ENCODE measurements at regions of chr2 and their contacts with region 1.

Region 1: DNA sequence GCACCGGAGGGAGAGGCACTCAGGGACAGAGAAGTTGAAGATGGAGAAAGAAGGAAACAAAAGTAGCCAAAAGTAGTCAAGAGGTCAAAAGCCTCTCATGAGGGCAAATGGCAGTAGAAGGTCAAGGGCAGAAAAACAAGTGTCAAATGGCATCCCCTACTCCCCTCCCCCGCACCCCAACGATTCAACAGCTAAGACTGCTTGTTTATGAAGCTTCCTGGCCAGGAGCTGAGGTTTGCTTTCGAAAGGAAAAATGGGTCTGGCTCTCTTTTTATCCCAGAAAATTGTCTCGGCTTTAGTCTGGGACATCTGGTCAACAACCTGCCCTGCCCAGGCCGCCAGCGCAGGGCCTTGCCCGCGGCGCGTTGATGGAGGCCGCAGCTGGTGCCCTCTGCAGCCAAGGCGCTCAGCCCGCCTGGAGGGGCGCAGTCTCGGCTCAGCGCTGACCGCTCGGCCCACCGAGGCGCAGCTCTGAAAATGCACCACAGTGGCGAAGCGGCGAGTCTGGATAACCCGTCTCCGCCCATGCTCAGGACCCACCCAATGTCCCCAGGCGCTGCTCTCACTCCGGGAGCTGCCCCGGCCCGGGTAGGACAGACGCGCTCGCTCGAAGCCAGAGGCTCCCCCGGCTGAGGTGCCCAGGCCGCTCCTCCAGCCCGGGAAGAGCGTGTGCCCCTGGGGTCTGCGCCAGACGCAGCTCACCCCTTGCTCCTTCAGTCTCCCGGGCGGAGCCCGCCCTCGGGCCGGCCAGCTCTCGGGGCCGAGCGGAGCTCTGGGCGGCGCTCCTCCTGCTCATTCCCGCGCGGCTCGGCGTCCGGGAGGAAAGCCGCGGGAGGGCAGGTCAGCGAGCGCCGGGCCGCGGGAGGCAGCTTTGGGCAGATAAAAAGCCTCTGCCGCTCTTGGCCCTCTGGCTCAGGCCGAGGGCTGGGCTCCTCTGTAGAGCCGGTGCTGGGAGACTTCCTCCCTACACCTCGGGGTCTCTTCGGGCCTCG is 1.8 kb upstream of the TBR1 start:
- DNase-seq: peak in 1 of 14 experiments; percentile 20
- ATAC-seq: peak; percentile 35
- H3K4me3 ChIP-seq: peak overlapping the region; percentile 27
- H3K4me3 Mint-ChIP-seq: peak overlapping the region; percentile 75
- H3K27ac ChIP-seq: no peak overlapping the region
- H3K27ac Mint-ChIP-seq: no peak overlapping the region
- H3K4me1 ChIP-seq: peaks cover 48% of the 10 kb centered on the region
- H3K4me1 Mint-ChIP-seq: peaks cover 50% of the 10 kb centered on the region
- H3K27me3 ChIP-seq: peaks cover 51 to 57% of the 10 kb centered on the region in 2 experiments
- H3K27me3 Mint-ChIP-seq: peaks cover 59% of the 10 kb centered on the region
- CTCF ChIP-seq: no peak

Region 2: GRCh38 chr2:161136696-161137324 is 277.5 kb before region 1 on chr2:
- CTCF ChIA-PET with region 1: no interaction called
- POLR2A ChIA-PET with region 1: no interaction called
- intact Hi-C with region 1: loop called in 1 of 2 experiments (anchors 5 kb)
- DNase-seq: peak in 6 of 14 experiments; percentile 11 to 93 (median 52)
- ATAC-seq: peak; percentile 88
- H3K4me3 ChIP-seq: peak overlapping the region; percentile 62
- H3K4me3 Mint-ChIP-seq: peak overlapping the region; percentile 87
- H3K27ac ChIP-seq: peak overlapping the region; percentile 76 to 91
- H3K27ac Mint-ChIP-seq: peak overlapping the region; percentile 89
- H3K4me1 ChIP-seq: peaks cover 16% of the 10 kb centered on the region
- H3K4me1 Mint-ChIP-seq: peaks cover 60% of the 10 kb centered on the region
- H3K27me3 ChIP-seq: no peaks in the 10 kb centered on the region
- H3K27me3 Mint-ChIP-seq: no peaks in the 10 kb centered on the region
- CTCF ChIP-seq: no peak

Region 3: DNA sequence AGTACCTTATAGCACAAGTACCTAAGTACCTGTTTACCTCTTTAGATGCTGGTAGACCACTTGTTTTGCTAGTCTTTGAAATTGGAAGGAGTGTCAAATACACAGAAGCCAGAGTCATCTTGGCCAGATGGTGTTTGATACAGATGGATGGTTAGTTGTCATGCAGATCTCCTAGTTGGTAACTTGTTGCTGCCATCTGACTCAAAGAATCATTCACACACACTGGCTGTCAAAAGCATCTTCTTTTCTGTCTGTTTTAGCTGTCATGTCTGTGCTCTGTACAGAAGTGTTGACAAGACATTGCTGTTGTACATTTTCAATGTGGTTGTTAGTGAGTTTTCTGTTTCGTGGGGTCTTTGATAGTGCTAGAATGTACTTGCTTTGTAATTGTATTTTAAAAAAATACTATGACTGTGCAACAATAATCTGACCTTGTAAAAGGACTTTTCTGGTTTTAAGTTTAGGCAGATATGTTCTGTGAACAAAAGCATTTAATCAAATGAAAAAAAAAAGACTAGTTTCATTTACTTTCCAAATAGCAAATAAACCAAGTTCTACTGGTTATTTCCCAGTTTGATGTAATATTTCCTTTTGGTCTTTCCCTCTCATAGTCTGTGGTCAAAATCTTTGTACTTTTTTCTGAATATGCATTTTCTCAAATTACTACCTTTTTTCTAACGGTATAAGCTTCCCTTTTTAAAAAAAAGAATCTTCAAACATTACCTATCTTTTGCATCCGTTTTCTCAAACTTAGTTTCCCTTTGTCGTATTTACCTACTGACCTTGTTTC is 214.2 kb before region 1 on chr2:
- CTCF ChIA-PET with region 1: no interaction called
- POLR2A ChIA-PET with region 1: no interaction called
- intact Hi-C with region 1: no loop called
- DNase-seq: peak in 3 of 14 experiments; percentile 5 to 34 (median 25)
- ATAC-seq: peak; percentile 32
- H3K4me3 ChIP-seq: no peak overlapping the region
- H3K4me3 Mint-ChIP-seq: peak overlapping the region; percentile 9
- H3K27ac ChIP-seq: no peak overlapping the region
- H3K27ac Mint-ChIP-seq: peak overlapping the region; percentile 45
- H3K4me1 ChIP-seq: peaks cover 10% of the 10 kb centered on the region
- H3K4me1 Mint-ChIP-seq: peaks cover 62% of the 10 kb centered on the region
- H3K27me3 ChIP-seq: no peaks in the 10 kb centered on the region
- H3K27me3 Mint-ChIP-seq: no peaks in the 10 kb centered on the region
- CTCF ChIP-seq: no peak

Region 4: DNA sequence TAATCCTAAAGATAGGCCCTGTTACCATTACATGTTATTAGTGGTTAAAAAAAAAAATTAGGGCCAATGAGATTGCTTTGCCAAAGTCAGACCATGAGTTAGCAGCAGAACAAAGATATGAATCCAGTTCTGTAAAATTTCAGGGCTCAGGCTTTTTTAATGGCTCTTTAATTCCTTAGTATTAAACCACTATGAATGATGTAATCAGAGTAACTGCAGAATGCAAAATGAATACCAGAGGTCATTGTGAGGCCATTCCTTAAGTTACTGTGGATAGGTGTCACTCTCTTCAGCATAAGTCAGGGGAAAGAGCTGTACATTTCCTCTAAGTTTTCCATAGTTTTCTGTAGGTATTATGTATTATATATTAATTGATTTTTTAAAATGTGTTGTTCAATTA is 40.4 kb before region 1 on chr2:
- CTCF ChIA-PET with region 1: no interaction called
- POLR2A ChIA-PET with region 1: no interaction called
- intact Hi-C with region 1: no loop called
- DNase-seq: no peak
- ATAC-seq: no peak
- H3K4me3 ChIP-seq: no peak overlapping the region
- H3K4me3 Mint-ChIP-seq: no peak overlapping the region
- H3K27ac ChIP-seq: no peak overlapping the region
- H3K27ac Mint-ChIP-seq: no peak overlapping the region
- H3K4me1 ChIP-seq: no peaks in the 10 kb centered on the region
- H3K4me1 Mint-ChIP-seq: no peaks in the 10 kb centered on the region
- H3K27me3 ChIP-seq: no peaks in the 10 kb centered on the region
- H3K27me3 Mint-ChIP-seq: no peaks in the 10 kb centered on the region
- CTCF ChIP-seq: no peak